ENCODE measurements at regions of chrX and their contacts with region 1.

Region 1: DNA sequence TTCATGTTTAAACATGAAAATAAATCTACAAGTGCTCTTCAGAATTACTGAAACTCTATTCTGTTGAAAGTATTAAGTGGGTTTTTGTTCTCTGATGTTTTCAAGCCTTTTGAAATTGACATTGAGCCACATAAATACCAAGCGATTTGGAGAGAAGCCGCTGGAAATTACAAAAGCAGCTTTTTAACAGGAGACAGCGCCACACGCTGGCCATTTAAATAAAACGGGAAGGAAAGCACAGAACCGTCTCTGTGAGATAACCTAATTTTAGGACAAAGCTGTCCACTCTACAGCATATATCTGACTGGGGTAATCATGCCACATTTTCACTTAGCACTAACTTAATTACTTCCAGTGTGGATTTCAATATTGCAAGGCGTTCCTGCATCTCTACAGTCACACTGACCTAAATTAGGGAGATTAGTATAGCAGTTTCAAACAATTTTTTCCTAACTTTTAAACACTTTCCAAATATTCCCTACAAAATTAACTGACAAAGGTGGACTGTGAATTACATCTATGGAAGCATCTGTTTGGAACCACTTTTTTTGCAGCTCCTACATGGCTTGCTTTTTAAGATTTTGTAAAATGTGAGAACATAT is 6.8 kb upstream of the ANOS1 start:
- DNase-seq: peak; percentile 59 to 77
- H3K4me3 ChIP-seq: no peak overlapping the region
- H3K27ac ChIP-seq: no peak overlapping the region
- H3K4me1 ChIP-seq: no peaks in the 10 kb centered on the region
- H3K27me3 ChIP-seq: peaks cover 0 to 1% (median 0%) of the 10 kb centered on the region in 3 donors
- CTCF ChIP-seq: peak in 5 of 7 experiments; percentile 30 to 58 (median 49)
- EP300 ChIP-seq: no peak
- POLR2A ChIP-seq: no peak

Region 2: DNA sequence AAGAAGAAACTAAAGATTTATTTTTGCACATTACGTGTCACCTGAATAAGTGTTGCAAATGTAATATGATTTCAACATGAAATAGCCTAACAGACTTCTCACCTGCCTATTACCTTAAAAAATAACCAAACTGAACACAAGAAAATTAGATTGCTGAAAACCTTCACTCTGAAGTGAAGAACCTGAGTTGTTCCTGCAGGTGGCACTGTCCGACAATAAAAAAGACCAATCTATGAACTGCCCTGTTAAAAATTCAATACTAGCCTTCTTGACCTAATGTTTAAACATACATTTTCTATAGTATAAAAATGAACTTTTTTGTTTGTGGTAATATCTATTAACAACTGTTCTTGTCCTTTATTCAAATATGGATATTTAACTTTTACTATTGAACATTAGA is 742.3 kb before region 1 on chrX:
- intact Hi-C with region 1: loop called (anchors 5 kb)
- DNase-seq: peak; percentile 28 to 75
- H3K4me3 ChIP-seq: no peak overlapping the region
- H3K27ac ChIP-seq: no peak overlapping the region
- H3K4me1 ChIP-seq: no peaks in the 10 kb centered on the region
- H3K27me3 ChIP-seq: no peaks in the 10 kb centered on the region
- CTCF ChIP-seq: peak in 5 of 7 experiments; percentile 20 to 61 (median 39)
- EP300 ChIP-seq: no peak
- POLR2A ChIP-seq: no peak

Region 3: DNA sequence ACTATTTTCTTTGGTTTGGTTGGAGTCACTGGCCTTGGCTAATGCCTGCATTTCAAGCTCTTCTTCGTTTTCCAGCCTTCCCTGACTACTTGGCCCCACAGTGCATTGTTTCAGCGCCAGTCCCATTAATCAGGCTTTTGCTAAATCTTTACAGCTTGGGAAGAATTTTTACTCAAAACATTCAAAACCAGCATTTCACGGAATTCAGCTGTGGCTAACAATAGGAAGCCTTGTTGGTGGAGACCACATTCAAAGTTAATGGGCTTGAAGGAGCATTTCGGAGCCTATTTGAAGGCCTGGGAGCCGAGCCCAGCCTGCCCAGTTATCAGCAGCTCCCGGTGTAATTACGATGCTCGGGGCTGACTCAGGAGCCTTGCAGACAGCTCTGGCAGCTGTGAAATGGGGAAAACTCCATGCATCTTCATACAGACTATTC is 536.8 kb before region 1 on chrX:
- intact Hi-C with region 1: no loop called
- DNase-seq: peak in 1 of 2 donors; percentile 29
- H3K4me3 ChIP-seq: no peak overlapping the region
- H3K27ac ChIP-seq: no peak overlapping the region
- H3K4me1 ChIP-seq: no peaks in the 10 kb centered on the region
- H3K27me3 ChIP-seq: no peaks in the 10 kb centered on the region
- CTCF ChIP-seq: no peak
- EP300 ChIP-seq: no peak
- POLR2A ChIP-seq: no peak

Region 4: DNA sequence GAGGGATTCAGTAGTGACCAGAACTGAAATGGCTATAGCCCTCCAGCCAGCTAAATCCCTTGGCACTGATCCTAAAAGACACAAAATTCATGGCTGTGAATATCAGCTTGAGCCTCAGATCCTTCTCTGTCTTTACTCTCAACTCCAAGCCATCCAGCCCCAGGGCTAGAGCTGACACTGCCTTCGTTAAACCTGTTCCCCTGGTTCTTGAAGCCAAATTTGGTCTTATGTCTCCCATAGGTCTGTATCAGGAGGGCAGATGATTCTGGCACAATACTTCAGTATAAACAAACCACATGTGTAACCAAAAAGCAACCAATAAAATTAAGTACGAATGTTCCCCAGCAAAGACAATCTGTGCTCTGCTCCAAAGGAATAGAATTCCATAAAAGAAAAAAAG is 84.7 kb before region 1 on chrX:
- intact Hi-C with region 1: no loop called
- DNase-seq: no peak
- H3K4me3 ChIP-seq: no peak overlapping the region
- H3K27ac ChIP-seq: no peak overlapping the region
- H3K4me1 ChIP-seq: no peaks in the 10 kb centered on the region
- H3K27me3 ChIP-seq: no peaks in the 10 kb centered on the region
- CTCF ChIP-seq: no peak
- EP300 ChIP-seq: no peak
- POLR2A ChIP-seq: no peak